K562 (cell line): ENCODE measurements at regions of chr6 and their contacts with region 1.

Region 1: GRCh38 chr6:43774776-43775534 is 4.9 kb downstream of the VEGFA start:
- DNase-seq: peak; percentile 88 to 93 (median 90)
- ATAC-seq: peak; percentile 30
- H3K4me3 ChIP-seq: peak overlapping the region; percentile 97
- H3K27ac ChIP-seq: peak overlapping the region; percentile 91
- H3K4me1 ChIP-seq: peaks cover 26 to 57% of the 10 kb centered on the region in 2 experiments
- H3K27me3 ChIP-seq: no peaks in the 10 kb centered on the region
- CTCF ChIP-seq: peak; percentile 88 to 93 (median 92)
- EP300 ChIP-seq: 0 out of 2 replicates have a peak, but pooled peaks have one; percentile 9
- POLR2A ChIP-seq: no peak
- RAD21 ChIP-seq: peak; percentile 66 to 78

Region 2: DNA sequence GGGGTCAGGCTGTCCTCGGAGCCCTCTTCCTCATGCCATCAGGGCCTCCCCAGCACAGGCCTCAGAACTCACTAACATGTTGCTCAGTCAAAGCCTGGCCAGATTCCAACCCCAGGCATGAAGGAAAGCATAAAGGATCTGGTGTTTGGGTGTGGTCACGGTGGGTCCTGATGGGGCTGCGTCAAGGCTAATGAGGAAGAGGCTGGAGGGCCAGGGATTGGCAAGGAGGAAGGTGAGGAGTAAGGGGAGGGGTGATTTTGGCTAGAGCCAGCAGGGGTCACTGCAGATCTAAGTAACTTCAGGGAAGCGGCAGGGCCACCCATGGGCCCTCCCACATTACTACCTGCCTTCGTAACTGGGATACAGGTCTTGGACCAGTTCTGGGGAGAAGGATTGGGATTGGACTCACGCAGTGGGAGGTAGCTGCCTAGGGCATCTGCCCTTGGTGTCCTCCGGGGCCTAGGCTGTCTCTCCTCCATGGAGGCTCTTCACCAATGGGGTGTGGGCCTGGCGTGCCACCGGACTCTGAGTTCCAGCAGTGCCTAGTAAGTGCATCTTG is 51.1 kb before region 1 on chr6:
- CTCF ChIA-PET with region 1: interaction called, 6 read pairs
- POLR2A ChIA-PET with region 1: interaction called, 3 read pairs
- in situ Hi-C with region 1: no loop called
- intact Hi-C with region 1: loop called (anchors 2 kb)
- DNase-seq: peak; percentile 91 to 94 (median 93)
- ATAC-seq: peak; percentile 87
- H3K4me3 ChIP-seq: no peak overlapping the region
- H3K27ac ChIP-seq: peak overlapping the region; percentile 68; the same call in 1 of the 3 replicates
- H3K4me1 ChIP-seq: peaks cover 25 to 31% of the 10 kb centered on the region in 2 experiments
- H3K27me3 ChIP-seq: no peaks in the 10 kb centered on the region; a peak in 1 of 5 replicates
- CTCF ChIP-seq: peak; percentile 91 to 98 (median 97)
- EP300 ChIP-seq: 0 out of 2 replicates have a peak, but pooled peaks have one; percentile 2
- POLR2A ChIP-seq: no peak
- RAD21 ChIP-seq: peak; percentile 93 to 97

Region 3: GRCh38 chr6:43790025-43790523 is 15.1 kb after region 1 on chr6:
- CTCF ChIA-PET with region 1: no interaction called
- POLR2A ChIA-PET with region 1: interaction called, 14 read pairs
- in situ Hi-C with region 1: no loop called
- intact Hi-C with region 1: no loop called
- DNase-seq: peak in 1 of 4 experiments; percentile 18
- ATAC-seq: no peak; the same call in 2 of the 3 replicates
- H3K4me3 ChIP-seq: no peak overlapping the region
- H3K27ac ChIP-seq: no peak overlapping the region
- H3K4me1 ChIP-seq: peaks cover 6 to 14% of the 10 kb centered on the region in 2 experiments; a peak in 3 of 5 replicates
- H3K27me3 ChIP-seq: no peaks in the 10 kb centered on the region
- CTCF ChIP-seq: no peak
- EP300 ChIP-seq: no peak
- POLR2A ChIP-seq: no peak
- RAD21 ChIP-seq: no peak

Region 4: GRCh38 chr6:43798688-43799444 is 23.9 kb after region 1 on chr6:
- CTCF ChIA-PET with region 1: no interaction called
- POLR2A ChIA-PET with region 1: interaction called, 6 read pairs
- in situ Hi-C with region 1: no loop called
- intact Hi-C with region 1: loop called (anchors 1 kb)
- DNase-seq: peak; percentile 85 to 96 (median 88)
- ATAC-seq: peak; percentile 95
- H3K4me3 ChIP-seq: no peak overlapping the region
- H3K27ac ChIP-seq: peak overlapping the region; percentile 51; the same call in 2 of the 3 replicates
- H3K4me1 ChIP-seq: peaks cover 41 to 47% of the 10 kb centered on the region in 2 experiments
- H3K27me3 ChIP-seq: no peaks in the 10 kb centered on the region
- CTCF ChIP-seq: no peak
- EP300 ChIP-seq: peak; percentile 80
- POLR2A ChIP-seq: no peak
- RAD21 ChIP-seq: no peak; a peak in 1 of 4 replicates

Region 5: DNA sequence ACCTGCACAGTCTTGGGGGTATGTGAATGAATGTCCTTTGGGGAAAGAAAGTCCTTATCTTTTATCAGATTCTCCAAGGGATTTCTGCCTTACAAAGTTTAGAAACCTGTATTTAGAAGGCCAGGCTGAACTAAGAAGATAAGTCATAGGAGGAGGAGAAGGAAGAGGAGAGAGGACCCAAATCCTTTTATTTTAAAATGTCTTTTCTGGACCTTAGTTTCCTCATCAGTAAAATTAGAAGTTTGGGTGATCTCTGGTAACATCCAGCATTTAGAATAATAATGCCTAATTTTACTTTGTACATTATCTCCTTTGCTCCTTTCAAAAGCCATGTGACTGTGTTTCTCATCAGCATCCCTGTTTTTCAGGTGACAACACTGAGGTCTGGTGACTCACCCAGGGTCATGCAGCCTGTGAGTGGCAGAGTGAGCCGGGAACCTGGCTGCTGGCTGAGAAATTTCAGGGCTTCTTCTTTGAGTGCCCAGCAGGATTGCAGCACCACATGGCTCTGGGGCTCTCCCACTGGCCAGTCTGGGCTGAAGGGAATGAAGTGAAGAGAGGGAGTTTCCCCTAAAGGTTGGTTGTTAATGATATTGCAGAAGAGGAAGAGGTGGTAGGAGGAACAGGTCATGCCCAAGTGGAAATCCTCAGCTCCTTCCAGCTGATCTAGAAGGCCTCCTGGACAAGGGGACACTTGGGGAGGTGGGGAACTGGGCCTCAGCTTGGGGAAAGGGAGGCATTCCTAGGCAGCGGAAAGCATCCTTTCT is 29.0 kb after region 1 on chr6:
- CTCF ChIA-PET with region 1: no interaction called
- POLR2A ChIA-PET with region 1: interaction called, 10 read pairs
- in situ Hi-C with region 1: no loop called
- intact Hi-C with region 1: no loop called
- DNase-seq: peak in 1 of 4 experiments; percentile 52
- ATAC-seq: peak; percentile 8; the same call in 1 of the 3 replicates
- H3K4me3 ChIP-seq: no peak overlapping the region
- H3K27ac ChIP-seq: peak overlapping the region; percentile 31; the same call in 2 of the 3 replicates
- H3K4me1 ChIP-seq: peaks cover 35 to 50% of the 10 kb centered on the region in 2 experiments
- H3K27me3 ChIP-seq: no peaks in the 10 kb centered on the region
- CTCF ChIP-seq: no peak
- EP300 ChIP-seq: 0 out of 2 replicates have a peak, but pooled peaks have one; percentile 6
- POLR2A ChIP-seq: no peak
- RAD21 ChIP-seq: no peak

Region 6: GRCh38 chr6:43817192-43817591 is 42.2 kb after region 1 on chr6:
- CTCF ChIA-PET with region 1: no interaction called
- POLR2A ChIA-PET with region 1: interaction called, 6 read pairs
- in situ Hi-C with region 1: no loop called
- intact Hi-C with region 1: loop called (anchors 1 kb)
- DNase-seq: peak; percentile 69 to 81 (median 72)
- ATAC-seq: peak; percentile 96
- H3K4me3 ChIP-seq: no peak overlapping the region
- H3K27ac ChIP-seq: no peak overlapping the region
- H3K4me1 ChIP-seq: peaks cover 0 to 12% of the 10 kb centered on the region in 2 experiments; a peak in 3 of 5 replicates
- H3K27me3 ChIP-seq: no peaks in the 10 kb centered on the region
- CTCF ChIP-seq: peak; percentile 78 to 85 (median 80)
- EP300 ChIP-seq: peak; percentile 35; the same call in 1 of the 2 replicates
- POLR2A ChIP-seq: no peak
- RAD21 ChIP-seq: peak; percentile 32 to 69; a peak in 3 of 4 replicates

Region 7: GRCh38 chr6:43838276-43839036 is 63.5 kb after region 1 on chr6:
- CTCF ChIA-PET with region 1: interaction called, 5 read pairs
- POLR2A ChIA-PET with region 1: interaction called, 6 read pairs
- in situ Hi-C with region 1: no loop called
- intact Hi-C with region 1: loop called (anchors 1 kb)
- DNase-seq: peak; percentile 73 to 84 (median 78)
- ATAC-seq: peak; percentile 87
- H3K4me3 ChIP-seq: no peak overlapping the region
- H3K27ac ChIP-seq: peak overlapping the region; percentile 44; the same call in 2 of the 3 replicates
- H3K4me1 ChIP-seq: peaks cover 30 to 38% of the 10 kb centered on the region in 2 experiments
- H3K27me3 ChIP-seq: peaks cover 5 to 12% of the 10 kb centered on the region in 2 experiments; a peak in 4 of 5 replicates
- CTCF ChIP-seq: peak; percentile 73 to 88 (median 81)
- EP300 ChIP-seq: 0 out of 2 replicates have a peak, but pooled peaks have one; percentile 28
- POLR2A ChIP-seq: no peak
- RAD21 ChIP-seq: peak; percentile 66 to 76